Left colon (tissue), 2 donors: ENCODE measurements at regions of chr17 and their contacts with region 1.

Region 1: GRCh38 chr17:33106525-33107165 is 115.0 kb downstream of the SPACA3 start:
- DNase-seq: no peak
- ATAC-seq: no peak

Region 2: GRCh38 chr17:33459078-33459940 is 352.7 kb after region 1 on chr17:
- intact Hi-C with region 1: loop called in 1 of 2 experiments (anchors 5 kb)
- DNase-seq: no peak
- ATAC-seq: no peak